Heart left ventricle (tissue), 16 donors: ENCODE measurements at regions of chr14 and their contacts with region 1.

Region 1: GRCh38 chr14:73759714-73760597 is 45.8 kb upstream of the PNMA1 start:
- DNase-seq: peak; percentile 96 to 97 (median 97)
- ATAC-seq: peak; percentile 55 to 89 (median 86)
- H3K4me3 ChIP-seq: peak overlapping the region; percentile 64 to 95 (median 79)
- H3K27ac ChIP-seq: peak overlapping the region; percentile 89 to 100 (median 98)
- H3K4me1 ChIP-seq: peaks cover 34 to 96% (median 86%) of the 10 kb centered on the region in 12 donors
- H3K27me3 ChIP-seq: no peaks in the 10 kb centered on the region
- CTCF ChIP-seq: peak in 3 of 12 donors; percentile 8 to 32 (median 32)
- POLR2A ChIP-seq: peak in 1 of 2 donors; percentile 68

Region 2: GRCh38 chr14:73825551-73826188 is 65.7 kb after region 1 on chr14:
- intact Hi-C with region 1: loop called in 3 of 10 experiments (anchors 2 to 10 kb)
- DNase-seq: peak; percentile 88 to 95 (median 92)
- ATAC-seq: peak; percentile 90 to 98 (median 96)
- H3K4me3 ChIP-seq: no peak overlapping the region
- H3K27ac ChIP-seq: peak overlapping the region in 1 of 12 donors; percentile 10
- H3K4me1 ChIP-seq: peaks cover 0 to 21% (median 7%) of the 10 kb centered on the region in 12 donors
- H3K27me3 ChIP-seq: no peaks in the 10 kb centered on the region
- CTCF ChIP-seq: peak; percentile 85 to 98 (median 94)
- POLR2A ChIP-seq: no peak

Region 3: DNA sequence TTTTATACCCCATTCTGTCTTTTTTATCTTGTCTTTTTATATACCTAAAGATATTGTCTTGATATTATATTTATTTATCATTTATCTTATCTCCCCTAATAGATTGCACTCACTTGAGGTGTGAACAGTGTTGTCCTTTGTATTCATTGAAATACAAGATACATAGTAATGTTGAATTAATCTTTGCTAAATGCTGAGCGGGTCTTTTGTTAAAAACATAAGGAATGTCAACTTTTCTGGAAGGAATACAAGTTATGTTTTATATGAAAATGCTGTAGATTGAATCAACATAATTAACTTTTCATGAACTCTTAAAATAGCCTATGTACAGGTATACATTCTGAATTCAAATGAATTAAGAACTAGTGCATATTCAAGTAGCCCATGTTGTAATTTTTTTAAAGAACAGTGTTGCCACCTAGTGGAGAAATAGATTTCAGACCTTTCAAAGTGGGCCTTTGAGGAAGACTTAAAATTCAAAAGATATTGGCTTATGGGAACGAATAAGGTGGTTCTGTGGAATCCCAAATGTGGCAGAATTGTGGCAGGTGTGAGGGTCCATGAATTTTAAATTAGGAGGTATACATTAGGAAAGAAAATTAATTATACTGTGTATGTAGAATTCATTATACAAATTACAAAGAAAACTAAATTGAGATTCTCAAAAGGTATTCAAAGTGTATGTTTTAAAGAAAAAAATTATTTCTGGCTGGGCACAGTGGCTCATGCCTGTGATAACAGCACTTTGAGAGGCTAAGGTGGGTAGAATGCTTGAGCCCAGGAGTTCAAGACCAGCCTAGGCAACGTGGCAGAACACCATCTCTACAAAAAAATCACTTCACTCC is 278.3 kb after region 1 on chr14:
- intact Hi-C with region 1: no loop called
- DNase-seq: no peak
- ATAC-seq: no peak
- H3K4me3 ChIP-seq: no peak overlapping the region
- H3K27ac ChIP-seq: no peak overlapping the region
- H3K4me1 ChIP-seq: no peaks in the 10 kb centered on the region
- H3K27me3 ChIP-seq: no peaks in the 10 kb centered on the region
- CTCF ChIP-seq: peak; percentile 52 to 73 (median 66)
- POLR2A ChIP-seq: no peak